ENCODE measurements at regions of chr11 and their contacts with region 1.

Region 1: GRCh38 chr11:66883016-66883968 is 26.4 kb downstream of the LRFN4 start:
- DNase-seq: peak; percentile 81 to 89 (median 84)
- H3K4me3 ChIP-seq: peak overlapping the region in 58 of 59 donors; percentile 6 to 65 (median 45)
- H3K27ac ChIP-seq: peak overlapping the region; percentile 38 to 96 (median 92)
- H3K27me3 ChIP-seq: no peaks in the 10 kb centered on the region
- CTCF ChIP-seq: peak; percentile 49 to 88 (median 79)

Region 2: GRCh38 chr11:66694732-66695207 is 188.5 kb before region 1 on chr11:
- intact Hi-C with region 1: loop called (anchors 2 to 5 kb)
- DNase-seq: peak; percentile 72 to 91 (median 86)
- H3K4me3 ChIP-seq: no peak overlapping the region
- H3K27ac ChIP-seq: peak overlapping the region in 26 of 59 donors; percentile 0 to 80 (median 36)
- H3K27me3 ChIP-seq: no peaks in the 10 kb centered on the region
- CTCF ChIP-seq: peak; percentile 88 to 98 (median 94)

Region 3: GRCh38 chr11:66855574-66856495 is 27.5 kb before region 1 on chr11:
- intact Hi-C with region 1: loop called in 1 of 2 experiments (anchors 2 kb)
- DNase-seq: peak; percentile 84 to 97 (median 93)
- H3K4me3 ChIP-seq: peak overlapping the region; percentile 55 to 90 (median 70)
- H3K27ac ChIP-seq: peak overlapping the region; percentile 68 to 98 (median 94)
- H3K27me3 ChIP-seq: no peaks in the 10 kb centered on the region
- CTCF ChIP-seq: peak in 21 of 56 donors; percentile 5 to 41 (median 22)

Region 4: GRCh38 chr11:66907751-66908630 is 24.7 kb after region 1 on chr11:
- intact Hi-C with region 1: loop called in 1 of 2 experiments (anchors 2 kb)
- DNase-seq: peak in 1 of 10 donors; percentile 16
- H3K4me3 ChIP-seq: no peak overlapping the region
- H3K27ac ChIP-seq: peak overlapping the region in 39 of 59 donors; percentile 1 to 74 (median 51)
- H3K27me3 ChIP-seq: no peaks in the 10 kb centered on the region
- CTCF ChIP-seq: no peak

Measured in dorsolateral prefrontal cortex (tissue), 120 donors.